Stomach (tissue), 19 donors: ENCODE measurements at regions of chr5 and their contacts with region 1.

Region 1: DNA sequence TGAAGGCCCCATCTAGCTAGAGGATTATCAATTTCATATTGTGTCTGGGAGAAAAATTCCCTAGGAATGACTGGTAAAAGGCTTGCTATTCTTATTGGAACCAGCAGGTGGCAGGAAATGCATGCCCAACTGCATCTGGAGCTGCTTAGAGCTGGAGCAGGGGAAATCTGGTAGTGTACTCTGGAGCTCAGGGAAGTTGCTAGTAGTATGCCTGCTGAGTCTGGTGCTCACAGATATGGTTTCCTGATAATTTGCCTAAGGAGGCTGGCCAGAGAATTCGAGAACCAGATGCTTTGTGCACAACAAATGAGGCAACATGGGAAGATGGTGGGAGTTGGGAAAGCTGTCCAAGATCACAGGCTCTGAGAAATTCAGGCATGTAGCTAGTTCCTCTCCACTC is 53.7 kb downstream of the G3BP1 start:
- DNase-seq: peak; percentile 63 to 89
- H3K4me3 ChIP-seq: no peak overlapping the region
- H3K27ac ChIP-seq: no peak overlapping the region
- H3K4me1 ChIP-seq: peaks cover 0 to 7% (median under 1%) of the 10 kb centered on the region in 4 donors
- H3K27me3 ChIP-seq: no peaks in the 10 kb centered on the region
- CTCF ChIP-seq: peak in 5 of 7 experiments; percentile 65 to 85 (median 81)
- EP300 ChIP-seq: no peak
- POLR2A ChIP-seq: no peak

Region 2: DNA sequence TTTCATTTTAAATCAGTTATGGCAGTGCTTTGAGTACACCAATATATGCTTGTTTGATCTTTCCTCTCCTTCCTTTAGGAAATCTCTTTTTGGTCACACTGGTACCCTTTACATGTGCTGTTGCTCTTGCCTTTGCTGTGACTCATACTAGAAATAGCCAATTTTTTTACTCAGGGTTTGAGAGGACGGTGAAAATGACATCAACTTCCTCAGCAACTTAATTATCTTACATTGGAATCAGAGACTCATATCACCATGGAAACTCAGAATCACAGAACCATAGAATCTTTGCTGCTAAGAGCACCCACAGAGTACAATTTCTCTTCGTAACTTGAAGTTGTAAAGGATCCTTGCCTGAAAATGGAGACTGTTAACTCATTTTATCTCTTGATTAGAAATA is 906.8 kb before region 1 on chr5:
- intact Hi-C with region 1: no loop called
- DNase-seq: no peak
- H3K4me3 ChIP-seq: no peak overlapping the region
- H3K27ac ChIP-seq: no peak overlapping the region
- H3K4me1 ChIP-seq: no peaks in the 10 kb centered on the region
- H3K27me3 ChIP-seq: no peaks in the 10 kb centered on the region
- CTCF ChIP-seq: no peak
- EP300 ChIP-seq: no peak
- POLR2A ChIP-seq: no peak

Region 3: GRCh38 chr5:152142840-152143469 is 317.5 kb after region 1 on chr5:
- intact Hi-C with region 1: loop called (anchors 5 kb)
- DNase-seq: peak; percentile 55 to 85
- H3K4me3 ChIP-seq: no peak overlapping the region
- H3K27ac ChIP-seq: no peak overlapping the region
- H3K4me1 ChIP-seq: peaks cover 0 to 4% (median 2%) of the 10 kb centered on the region in 4 donors
- H3K27me3 ChIP-seq: no peaks in the 10 kb centered on the region
- CTCF ChIP-seq: peak in 5 of 7 experiments; percentile 33 to 86 (median 71)
- EP300 ChIP-seq: no peak
- POLR2A ChIP-seq: no peak

Region 4: DNA sequence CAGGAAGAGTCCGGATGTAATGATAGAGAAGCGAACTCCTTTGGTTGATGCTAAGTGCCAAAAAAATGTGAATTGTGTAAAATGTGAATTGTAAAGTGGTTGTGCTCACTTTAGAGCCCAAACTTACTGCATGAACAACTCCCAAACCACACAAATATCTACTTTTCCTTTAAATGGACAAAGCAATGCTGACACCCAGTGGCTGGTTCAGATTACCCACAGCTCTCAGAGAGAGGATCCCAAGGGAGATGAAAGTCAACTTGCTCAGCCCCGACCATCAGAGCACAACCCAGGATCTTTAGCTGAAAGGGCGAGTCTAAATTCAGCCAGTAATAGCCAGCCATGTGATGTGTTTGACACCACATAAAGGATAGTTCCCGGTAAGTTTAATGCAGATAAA is 446.0 kb after region 1 on chr5:
- intact Hi-C with region 1: loop called (anchors 10 kb)
- DNase-seq: peak; percentile 27 to 63
- H3K4me3 ChIP-seq: no peak overlapping the region
- H3K27ac ChIP-seq: no peak overlapping the region
- H3K4me1 ChIP-seq: no peaks in the 10 kb centered on the region
- H3K27me3 ChIP-seq: no peaks in the 10 kb centered on the region
- CTCF ChIP-seq: peak in 2 of 7 experiments; percentile 9 to 44
- EP300 ChIP-seq: no peak
- POLR2A ChIP-seq: no peak

Region 5: DNA sequence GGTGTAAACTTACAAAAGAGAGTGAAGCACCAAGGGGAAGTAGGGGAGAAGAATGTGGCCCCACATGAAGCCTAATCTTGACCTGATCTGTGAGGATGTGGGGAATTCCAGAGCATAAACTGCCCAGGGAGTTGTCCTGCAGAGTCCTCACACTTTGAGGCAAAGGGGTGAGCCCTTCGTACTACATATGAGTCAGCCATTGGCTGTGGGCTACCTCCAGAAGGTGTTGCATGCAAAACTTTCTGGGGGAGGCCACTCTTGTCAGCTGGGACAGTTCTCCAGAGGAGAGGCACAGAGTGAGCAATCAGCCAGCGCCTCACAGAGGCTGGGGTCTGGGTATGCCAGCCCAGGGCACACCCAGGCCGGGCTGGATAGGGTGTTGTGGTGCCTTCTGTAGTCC is 677.8 kb after region 1 on chr5:
- intact Hi-C with region 1: loop called (anchors 5 kb)
- DNase-seq: no peak
- H3K4me3 ChIP-seq: no peak overlapping the region
- H3K27ac ChIP-seq: no peak overlapping the region
- H3K4me1 ChIP-seq: peaks cover 0 to 6% (median 0%) of the 10 kb centered on the region in 4 donors
- H3K27me3 ChIP-seq: no peaks in the 10 kb centered on the region
- CTCF ChIP-seq: no peak
- EP300 ChIP-seq: no peak
- POLR2A ChIP-seq: no peak